ENCODE measurements at regions of chr17 and their contacts with region 1.

Region 1: DNA sequence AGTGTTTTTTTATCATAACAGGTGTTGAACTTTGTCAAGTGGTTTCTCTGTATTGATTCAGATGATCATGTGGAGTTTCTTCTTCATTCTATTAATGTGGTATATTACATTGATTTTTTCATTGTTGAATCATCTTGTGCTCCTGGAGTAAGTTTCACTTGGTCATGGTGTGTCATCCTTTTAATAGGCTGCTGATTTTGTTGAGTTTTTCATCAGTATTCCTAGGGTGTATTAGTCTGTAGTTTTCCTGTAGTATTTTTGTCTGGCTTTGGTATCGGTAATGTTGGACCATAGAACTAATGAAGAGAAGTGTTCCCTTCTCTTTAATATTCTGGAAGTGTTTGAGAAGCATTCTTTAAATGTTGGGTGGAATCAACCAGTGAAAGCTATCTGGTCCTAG is 99.0 kb downstream of the OMG start:
- DNase-seq: no peak
- ATAC-seq: no peak
- H3K4me3 ChIP-seq: no peak overlapping the region
- H3K27ac ChIP-seq: no peak overlapping the region
- H3K4me1 ChIP-seq: peaks cover 0 to 15% (median 5%) of the 10 kb centered on the region in 9 donors
- H3K27me3 ChIP-seq: no peaks in the 10 kb centered on the region
- CTCF ChIP-seq: no peak

Region 2: GRCh38 chr17:31100840-31101459 is 97.0 kb before region 1 on chr17:
- intact Hi-C with region 1: loop called in 1 of 10 experiments (anchors 10 kb)
- DNase-seq: no peak
- ATAC-seq: peak in 1 of 8 donors; percentile 11
- H3K4me3 ChIP-seq: no peak overlapping the region
- H3K27ac ChIP-seq: peak overlapping the region in 1 of 10 donors; percentile 48
- H3K4me1 ChIP-seq: peaks cover 4 to 35% (median 18%) of the 10 kb centered on the region in 9 donors
- H3K27me3 ChIP-seq: no peaks in the 10 kb centered on the region
- CTCF ChIP-seq: no peak

Region 3: DNA sequence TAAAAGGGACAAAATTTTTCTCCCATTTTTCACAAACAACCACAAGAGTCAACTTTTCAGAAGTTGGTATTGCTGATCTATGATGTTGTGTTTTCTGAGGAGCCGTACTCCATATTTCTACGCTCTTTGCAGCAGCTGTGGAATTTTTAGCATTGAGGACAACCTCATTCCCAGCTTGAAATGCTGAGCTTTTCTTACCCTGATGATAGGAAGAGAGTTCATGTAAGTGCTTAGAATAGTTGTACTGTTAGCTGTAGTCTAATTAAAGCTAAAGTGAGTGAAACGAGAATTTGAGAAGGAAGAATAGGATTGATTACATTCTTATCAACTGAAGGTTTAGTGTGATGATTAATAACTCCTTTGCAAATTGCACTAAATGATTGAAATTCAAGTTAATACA is 30.9 kb before region 1 on chr17:
- intact Hi-C with region 1: no loop called
- DNase-seq: no peak
- ATAC-seq: peak in 7 of 8 donors; percentile 42 to 90 (median 80)
- H3K4me3 ChIP-seq: no peak overlapping the region
- H3K27ac ChIP-seq: peak overlapping the region in 6 of 10 donors; percentile 46 to 64 (median 54)
- H3K4me1 ChIP-seq: peaks cover 0 to 4% (median 0%) of the 10 kb centered on the region in 9 donors
- H3K27me3 ChIP-seq: no peaks in the 10 kb centered on the region
- CTCF ChIP-seq: no peak